PC-9 (cell line): ENCODE measurements at regions of chr12 and their contacts with region 1.

Region 1: GRCh38 chr12:102567031-102567985 is 86.9 kb upstream of the IGF1 start:
- DNase-seq: peak; percentile 47 to 92
- H3K4me3 ChIP-seq: peak overlapping the region; percentile 29; the same call in 1 of the 2 replicates
- H3K27ac ChIP-seq: peak overlapping the region; percentile 96
- H3K4me1 ChIP-seq: peaks cover 68% of the 10 kb centered on the region
- H3K27me3 ChIP-seq: no peaks in the 10 kb centered on the region
- CTCF ChIP-seq: no peak

Region 2: GRCh38 chr12:101719546-101719945 is 847.8 kb before region 1 on chr12:
- CTCF ChIA-PET with region 1: no interaction called
- POLR2A ChIA-PET with region 1: no interaction called
- intact Hi-C with region 1: no loop called
- DNase-seq: no peak
- H3K4me3 ChIP-seq: no peak overlapping the region
- H3K27ac ChIP-seq: no peak overlapping the region
- H3K4me1 ChIP-seq: no peaks in the 10 kb centered on the region
- H3K27me3 ChIP-seq: no peaks in the 10 kb centered on the region
- CTCF ChIP-seq: no peak

Region 3: DNA sequence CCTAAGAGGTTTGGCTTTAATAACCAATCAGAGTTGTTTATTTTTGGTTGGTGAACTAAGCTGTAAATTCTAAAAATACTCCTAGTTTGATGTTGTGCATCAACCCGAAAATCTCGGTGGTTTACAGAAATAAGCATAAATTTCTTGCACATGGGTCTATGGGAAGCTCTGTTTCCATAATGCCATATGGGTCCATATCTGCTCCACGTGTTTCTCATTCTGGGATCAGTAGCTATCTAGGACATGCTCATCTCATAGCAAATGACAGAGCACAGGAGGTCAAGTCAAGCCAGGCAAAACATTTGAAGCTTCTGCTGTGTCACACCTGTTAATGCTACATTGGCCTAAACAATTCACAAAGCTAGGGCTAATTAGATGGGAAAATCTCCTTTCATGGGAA is 470.5 kb before region 1 on chr12:
- CTCF ChIA-PET with region 1: no interaction called
- POLR2A ChIA-PET with region 1: no interaction called
- intact Hi-C with region 1: no loop called
- DNase-seq: no peak
- H3K4me3 ChIP-seq: no peak overlapping the region
- H3K27ac ChIP-seq: no peak overlapping the region
- H3K4me1 ChIP-seq: no peaks in the 10 kb centered on the region
- H3K27me3 ChIP-seq: no peaks in the 10 kb centered on the region
- CTCF ChIP-seq: no peak

Region 4: DNA sequence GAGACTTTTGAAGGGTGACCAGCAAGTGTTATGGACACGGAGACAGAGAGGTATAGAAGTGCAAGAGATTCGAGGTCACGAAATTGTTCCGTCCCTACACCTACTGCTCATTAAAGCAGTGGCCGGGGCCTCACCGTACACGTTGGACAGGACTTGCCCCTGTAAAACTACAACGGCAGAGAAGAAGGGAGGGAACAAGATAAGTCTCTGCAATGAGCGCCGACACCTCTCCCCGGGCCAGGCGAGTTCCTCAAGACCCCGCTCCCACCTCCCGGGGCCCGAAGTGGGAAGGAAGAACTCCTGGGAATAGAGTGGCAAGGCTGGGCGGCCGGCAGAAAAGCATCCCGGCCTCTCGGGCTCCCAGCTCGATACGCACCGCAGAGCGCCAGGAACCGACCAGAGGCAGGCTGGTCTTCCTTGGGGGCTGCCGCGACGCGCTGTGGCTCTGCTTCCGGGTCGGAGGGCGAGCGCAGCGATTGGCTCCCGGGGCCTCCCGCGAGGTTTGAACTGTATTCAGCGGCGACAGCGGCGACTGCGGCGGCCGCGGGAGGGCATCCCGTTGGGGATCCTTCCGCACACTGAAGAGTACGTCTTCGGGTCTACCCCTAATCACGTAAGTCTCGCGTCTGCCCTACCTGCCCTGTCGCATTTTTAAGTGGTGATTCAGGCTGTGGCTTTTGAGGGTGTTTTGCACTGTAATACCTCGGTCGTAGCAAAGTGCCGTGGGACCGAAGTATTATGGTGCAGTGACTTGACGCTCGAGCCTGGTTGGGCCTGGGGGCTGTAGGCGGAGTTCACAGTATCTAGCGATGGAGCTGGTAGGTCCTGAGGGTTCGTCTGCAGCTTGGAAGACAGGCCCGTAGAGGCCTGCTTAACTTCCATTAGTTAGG is 447.4 kb before region 1 on chr12 and contains the starts of genes NUP37 and PARPBP:
- CTCF ChIA-PET with region 1: no interaction called
- POLR2A ChIA-PET with region 1: no interaction called
- intact Hi-C with region 1: loop called (anchors 10 kb)
- DNase-seq: peak; percentile 92 to 96
- H3K4me3 ChIP-seq: peak within 1 kb of the TSS; percentile 93
- H3K27ac ChIP-seq: peak within 1 kb of the TSS; percentile 92
- H3K4me1 ChIP-seq: peaks cover 23% of the 10 kb centered on the region
- H3K27me3 ChIP-seq: no peaks in the 10 kb centered on the region
- CTCF ChIP-seq: no peak
- total RNA-seq, gene NUP37: 48.2 and 72.4 TPM in 2 replicates
- total RNA-seq, gene PARPBP: 12.8 and 16.2 TPM in 2 replicates

Region 5: GRCh38 chr12:102195826-102196225 is 371.5 kb before region 1 on chr12:
- CTCF ChIA-PET with region 1: no interaction called
- POLR2A ChIA-PET with region 1: no interaction called
- intact Hi-C with region 1: no loop called
- DNase-seq: no peak
- H3K4me3 ChIP-seq: no peak overlapping the region
- H3K27ac ChIP-seq: no peak overlapping the region
- H3K4me1 ChIP-seq: 0 out of 2 replicates have a peak, but pooled peaks cover 9% of the 10 kb centered on the region
- H3K27me3 ChIP-seq: no peaks in the 10 kb centered on the region
- CTCF ChIP-seq: no peak

Region 6: DNA sequence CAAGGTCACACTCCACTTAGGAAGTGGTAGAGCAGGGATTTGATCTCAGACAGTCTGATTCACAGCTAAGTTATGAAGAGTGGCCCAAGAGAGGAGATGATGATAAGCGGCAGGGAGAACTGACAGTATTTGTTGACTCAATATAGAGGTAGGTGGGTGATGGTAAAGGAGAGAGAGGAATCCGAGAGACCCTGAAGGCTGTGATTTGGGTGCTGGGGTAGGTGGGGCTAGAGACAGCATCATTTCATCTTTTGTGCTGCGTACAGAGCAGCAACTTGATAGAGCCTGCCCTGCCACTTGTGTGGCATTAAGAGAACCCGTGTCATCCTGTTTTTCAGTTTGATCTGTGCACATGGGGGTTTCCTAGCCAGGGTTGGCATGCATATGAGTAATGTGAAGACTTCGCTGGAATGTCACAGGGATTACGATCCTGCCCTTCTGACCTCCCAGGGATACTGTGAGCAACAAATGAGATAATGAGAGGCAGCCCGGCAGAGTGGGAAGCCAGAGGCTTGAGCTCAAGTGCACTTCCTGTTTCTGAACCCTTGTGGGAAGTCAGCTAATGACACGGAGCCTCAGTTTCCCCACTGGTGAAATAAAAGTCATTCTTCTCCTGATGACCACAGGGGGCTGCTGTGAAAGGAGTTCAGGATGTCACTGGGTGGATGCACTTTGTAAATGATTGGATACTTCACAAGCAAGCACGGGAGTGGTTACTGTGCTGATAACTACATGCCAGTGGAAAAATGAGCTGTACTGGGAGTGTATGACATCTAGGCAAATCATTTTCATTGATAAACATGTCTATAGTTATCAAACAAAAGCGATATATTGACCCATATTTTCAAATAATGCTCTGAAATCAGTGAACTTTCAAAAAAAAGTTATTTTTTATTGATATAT is 27.4 kb before region 1 on chr12:
- CTCF ChIA-PET with region 1: interaction called, 6 read pairs
- POLR2A ChIA-PET with region 1: interaction called, 3 read pairs
- intact Hi-C with region 1: loop called (anchors 1 kb)
- DNase-seq: peak; percentile 56 to 82
- H3K4me3 ChIP-seq: no peak overlapping the region
- H3K27ac ChIP-seq: peak overlapping the region; percentile 72
- H3K4me1 ChIP-seq: peaks cover 20% of the 10 kb centered on the region
- H3K27me3 ChIP-seq: no peaks in the 10 kb centered on the region
- CTCF ChIP-seq: no peak

Region 7: DNA sequence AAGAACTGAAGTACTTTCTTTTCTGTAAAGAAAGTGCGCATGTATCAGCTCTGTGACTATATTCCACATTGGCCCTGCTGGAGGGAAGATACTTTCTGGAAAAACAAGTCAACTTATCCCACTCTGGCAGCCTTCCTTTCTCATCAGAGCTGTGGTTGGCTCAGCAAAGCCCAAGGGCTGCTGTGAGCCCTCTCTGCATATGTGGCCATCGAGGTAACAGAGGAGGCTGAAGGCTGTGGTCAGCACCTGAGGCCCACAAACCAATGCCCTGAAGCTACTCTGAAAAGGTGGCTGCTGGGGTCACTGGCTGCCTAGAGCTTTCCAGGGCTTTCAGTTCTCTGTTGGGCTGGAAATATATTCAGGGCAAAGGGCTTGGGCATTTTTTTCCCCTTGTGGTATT is 16.1 kb before region 1 on chr12:
- CTCF ChIA-PET with region 1: no interaction called
- POLR2A ChIA-PET with region 1: no interaction called
- intact Hi-C with region 1: no loop called
- DNase-seq: no peak
- H3K4me3 ChIP-seq: no peak overlapping the region
- H3K27ac ChIP-seq: no peak overlapping the region
- H3K4me1 ChIP-seq: no peaks in the 10 kb centered on the region
- H3K27me3 ChIP-seq: no peaks in the 10 kb centered on the region
- CTCF ChIP-seq: no peak

Region 8: DNA sequence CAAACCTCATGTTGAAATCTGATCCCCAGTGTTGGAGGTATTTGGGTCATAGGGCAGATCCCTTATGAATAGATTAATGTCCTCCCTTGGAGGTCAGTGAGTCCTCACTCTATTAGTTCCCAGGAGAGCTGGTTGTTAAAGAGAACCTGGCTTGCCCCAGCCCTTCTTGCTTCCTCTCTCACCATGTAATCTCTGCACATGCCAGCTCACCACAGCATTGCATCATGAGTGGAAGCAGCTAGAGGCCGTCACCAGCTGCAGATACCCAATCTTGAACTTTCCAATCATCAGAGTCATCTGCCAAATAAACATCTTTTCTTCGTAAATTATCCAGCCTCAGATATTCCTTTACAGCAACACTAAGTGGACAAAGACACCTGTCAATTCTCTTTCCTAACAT is 74.9 kb after region 1 on chr12:
- CTCF ChIA-PET with region 1: interaction called, 17 read pairs
- POLR2A ChIA-PET with region 1: no interaction called
- intact Hi-C with region 1: no loop called
- DNase-seq: no peak
- H3K4me3 ChIP-seq: no peak overlapping the region
- H3K27ac ChIP-seq: no peak overlapping the region
- H3K4me1 ChIP-seq: peaks cover 31% of the 10 kb centered on the region
- H3K27me3 ChIP-seq: no peaks in the 10 kb centered on the region
- CTCF ChIP-seq: no peak